ENCODE measurements at regions of chr10 and their contacts with region 1.

Region 1: GRCh38 chr10:77846718-77847630 is 79.6 kb downstream of the DLG5 start:
- DNase-seq: peak; percentile 81
- CTCF ChIP-seq: peak; percentile 91

Region 2: GRCh38 chr10:77857254-77857653 is 10.3 kb after region 1 on chr10:
- CTCF ChIA-PET with region 1: interaction called, 25 read pairs
- POLR2A ChIA-PET with region 1: no interaction called
- DNase-seq: no peak
- CTCF ChIP-seq: no peak

Measured in GM10248 (cell line).